ENCODE measurements at regions of chr4 and their contacts with region 1.

Region 1: GRCh38 chr4:76377911-76378310 is 43.0 kb downstream of the CCDC158 start:
- DNase-seq: peak; percentile 64
- H3K4me3 Mint-ChIP-seq: no peak overlapping the region
- H3K27ac Mint-ChIP-seq: no peak overlapping the region
- H3K4me1 Mint-ChIP-seq: no peaks in the 10 kb centered on the region
- H3K27me3 Mint-ChIP-seq: no peaks in the 10 kb centered on the region

Region 2: GRCh38 chr4:74570095-74570494 is 1807.8 kb before region 1 on chr4:
- CTCF ChIA-PET with region 1: no interaction called
- POLR2A ChIA-PET with region 1: no interaction called
- intact Hi-C with region 1: no loop called
- DNase-seq: no peak
- H3K4me3 Mint-ChIP-seq: no peak overlapping the region
- H3K27ac Mint-ChIP-seq: no peak overlapping the region
- H3K4me1 Mint-ChIP-seq: no peaks in the 10 kb centered on the region
- H3K27me3 Mint-ChIP-seq: no peaks in the 10 kb centered on the region

Region 3: GRCh38 chr4:75135068-75135825 is 1242.7 kb before region 1 on chr4:
- CTCF ChIA-PET with region 1: no interaction called
- POLR2A ChIA-PET with region 1: no interaction called
- intact Hi-C with region 1: no loop called
- DNase-seq: no peak
- H3K4me3 Mint-ChIP-seq: no peak overlapping the region
- H3K27ac Mint-ChIP-seq: no peak overlapping the region
- H3K4me1 Mint-ChIP-seq: no peaks in the 10 kb centered on the region
- H3K27me3 Mint-ChIP-seq: peaks cover 1% of the 10 kb centered on the region

Region 4: DNA sequence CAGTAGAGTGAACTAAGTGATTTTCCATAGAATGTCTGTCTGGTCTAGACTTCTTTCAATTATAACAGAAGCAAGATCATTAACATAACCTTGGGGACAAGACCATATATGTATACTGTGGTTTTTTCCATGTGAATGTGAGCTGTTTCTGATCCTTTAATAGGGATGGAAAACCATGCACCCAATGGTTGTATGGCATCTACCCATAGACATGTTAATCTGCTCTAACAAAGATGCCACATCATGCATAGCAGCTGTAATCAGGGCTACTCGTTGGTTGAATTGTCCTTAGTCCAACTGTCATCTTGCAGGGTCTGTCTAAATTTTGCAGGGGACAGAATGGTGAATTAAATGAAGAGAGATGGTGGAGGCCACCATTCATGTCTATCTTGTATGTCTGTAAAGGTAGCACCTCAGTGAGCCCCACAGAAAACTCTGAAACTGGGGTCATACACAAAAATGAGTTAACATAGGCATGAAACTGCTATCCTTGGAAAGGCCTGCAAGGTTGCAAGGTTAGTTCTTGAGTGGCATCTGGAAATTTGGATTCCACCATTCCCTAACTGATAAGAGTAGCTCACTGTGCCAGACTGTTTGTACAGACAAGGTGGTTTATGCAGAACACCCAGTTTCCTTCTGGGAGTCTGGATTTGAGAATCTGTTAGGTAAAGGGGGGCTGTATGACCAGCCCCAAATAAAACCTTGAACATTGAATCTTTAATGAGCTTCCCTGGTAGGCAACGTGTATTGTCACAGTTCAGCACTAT is 847.2 kb before region 1 on chr4:
- CTCF ChIA-PET with region 1: no interaction called
- POLR2A ChIA-PET with region 1: no interaction called
- intact Hi-C with region 1: no loop called
- DNase-seq: no peak
- H3K4me3 Mint-ChIP-seq: no peak overlapping the region
- H3K27ac Mint-ChIP-seq: no peak overlapping the region
- H3K4me1 Mint-ChIP-seq: peaks cover 2% of the 10 kb centered on the region
- H3K27me3 Mint-ChIP-seq: no peaks in the 10 kb centered on the region

Region 5: GRCh38 chr4:76251441-76252270 is 126.3 kb before region 1 on chr4 and contains the start of gene FAM47E:
- CTCF ChIA-PET with region 1: interaction called, 10 read pairs
- POLR2A ChIA-PET with region 1: no interaction called
- intact Hi-C with region 1: loop called (anchors 5 kb)
- DNase-seq: peak; percentile 55
- H3K4me3 Mint-ChIP-seq: peak within 1 kb of the TSS; percentile 69
- H3K27ac Mint-ChIP-seq: no peak within 1 kb of the TSS
- H3K4me1 Mint-ChIP-seq: peaks cover 8% of the 10 kb centered on the region
- H3K27me3 Mint-ChIP-seq: peaks cover 53% of the 10 kb centered on the region
- total RNA-seq, gene FAM47E: not detected

Region 6: DNA sequence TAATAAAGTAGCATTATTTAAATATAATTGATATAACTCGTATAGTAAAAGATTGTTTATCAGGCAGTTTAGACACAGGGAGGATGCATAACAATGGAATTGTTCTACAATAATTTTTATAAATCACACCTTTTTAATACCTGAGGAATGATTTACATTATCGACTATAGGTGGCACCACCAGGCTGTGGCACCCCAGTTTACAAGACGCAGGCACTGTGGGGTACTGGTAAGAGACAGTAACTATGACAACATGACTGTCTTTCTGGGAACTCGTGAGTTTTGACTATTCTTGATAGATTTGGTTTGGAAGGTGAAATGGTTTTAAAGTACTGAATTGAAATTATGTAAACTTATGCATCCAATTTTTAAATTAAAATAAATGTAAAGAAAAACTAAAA is 98.4 kb before region 1 on chr4:
- CTCF ChIA-PET with region 1: interaction called, 40 read pairs
- POLR2A ChIA-PET with region 1: no interaction called
- intact Hi-C with region 1: loop called (anchors 1 kb)
- DNase-seq: peak; percentile 24
- H3K4me3 Mint-ChIP-seq: no peak overlapping the region
- H3K27ac Mint-ChIP-seq: no peak overlapping the region
- H3K4me1 Mint-ChIP-seq: no peaks in the 10 kb centered on the region
- H3K27me3 Mint-ChIP-seq: peaks cover 4% of the 10 kb centered on the region

Region 7: GRCh38 chr4:76354517-76355473 is 23.1 kb before region 1 on chr4:
- CTCF ChIA-PET with region 1: interaction called, 10 read pairs
- POLR2A ChIA-PET with region 1: no interaction called
- intact Hi-C with region 1: no loop called
- DNase-seq: peak; percentile 49
- H3K4me3 Mint-ChIP-seq: no peak overlapping the region
- H3K27ac Mint-ChIP-seq: no peak overlapping the region
- H3K4me1 Mint-ChIP-seq: peaks cover 10% of the 10 kb centered on the region
- H3K27me3 Mint-ChIP-seq: no peaks in the 10 kb centered on the region

Measured in activated CD4-positive, alpha-beta memory T cell treated with anti-CD3 and anti-CD28 coated beads for 36 hours (primary cell).